ENCODE measurements at regions of chrX and their contacts with region 1.

Region 1: GRCh38 chrX:107776649-107777535 is 641 bp upstream of the NCBP2L start:
- DNase-seq: peak; percentile 74
- H3K4me3 Mint-ChIP-seq: peak overlapping the region; percentile 81
- H3K27ac Mint-ChIP-seq: no peak overlapping the region
- H3K4me1 Mint-ChIP-seq: peaks cover 13% of the 10 kb centered on the region
- H3K27me3 Mint-ChIP-seq: peaks cover 6% of the 10 kb centered on the region

Region 2: DNA sequence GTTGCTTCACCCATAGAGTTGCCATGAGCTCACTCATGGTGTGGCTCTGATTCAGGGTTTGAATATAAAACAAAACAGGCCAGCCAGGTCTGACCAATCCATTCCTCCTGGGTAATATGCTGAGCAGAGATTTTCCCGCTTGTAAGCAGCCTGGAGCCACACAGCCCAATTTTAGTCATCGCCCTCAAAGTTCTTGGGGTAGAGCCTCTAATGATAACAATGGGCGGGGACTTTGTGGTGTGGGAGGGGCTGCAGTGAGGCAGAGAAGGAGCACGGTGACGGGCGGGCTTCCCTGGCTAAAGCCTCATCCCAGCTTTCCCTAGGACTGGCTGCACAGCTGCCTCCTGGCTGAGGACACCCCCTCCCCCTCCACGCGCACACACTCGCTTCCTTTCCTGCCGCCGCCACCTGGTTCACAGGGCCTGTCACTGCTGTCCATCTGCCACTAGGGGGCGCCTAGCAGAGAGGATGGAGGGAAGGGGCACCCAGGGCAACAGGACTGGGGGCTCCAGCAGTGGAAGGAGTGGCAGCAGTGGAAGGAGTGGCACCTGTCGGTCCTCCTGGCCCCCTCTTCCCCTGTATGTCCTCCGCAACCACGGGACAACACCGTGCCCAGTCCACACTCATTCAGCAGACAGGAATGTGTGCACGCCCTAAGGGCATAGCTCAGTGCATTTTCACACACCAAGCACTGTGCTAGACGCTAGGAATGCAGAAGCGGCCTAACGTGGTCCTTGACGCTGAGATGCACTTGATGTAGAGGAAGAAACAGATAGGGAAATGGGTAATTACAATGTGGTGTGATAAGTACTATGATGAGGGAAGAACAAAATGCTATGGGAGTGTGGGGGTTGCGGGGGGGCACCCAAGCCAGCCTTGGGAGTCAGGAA is 121.8 kb before region 1 on chrX:
- CTCF ChIA-PET with region 1: interaction called, 134 read pairs
- POLR2A ChIA-PET with region 1: interaction called, 7 read pairs
- DNase-seq: peak; percentile 66
- H3K4me3 Mint-ChIP-seq: no peak overlapping the region
- H3K27ac Mint-ChIP-seq: no peak overlapping the region
- H3K4me1 Mint-ChIP-seq: peaks cover 13% of the 10 kb centered on the region
- H3K27me3 Mint-ChIP-seq: no peaks in the 10 kb centered on the region

Region 3: GRCh38 chrX:107667426-107667825 is 109.5 kb before region 1 on chrX:
- CTCF ChIA-PET with region 1: interaction called, 80 read pairs
- POLR2A ChIA-PET with region 1: interaction called, 21 read pairs
- DNase-seq: no peak
- H3K4me3 Mint-ChIP-seq: no peak overlapping the region
- H3K27ac Mint-ChIP-seq: no peak overlapping the region
- H3K4me1 Mint-ChIP-seq: peaks cover 4% of the 10 kb centered on the region
- H3K27me3 Mint-ChIP-seq: no peaks in the 10 kb centered on the region

Measured in activated CD4-positive, alpha-beta memory T cell treated with anti-CD3 and anti-CD28 coated beads, Interleukin-2, amount 10 ng/mL, durations not matched to agents 7 days and 5 days (primary cell).